ENCODE measurements at regions of chr16 and their contacts with region 1.

Region 1: DNA sequence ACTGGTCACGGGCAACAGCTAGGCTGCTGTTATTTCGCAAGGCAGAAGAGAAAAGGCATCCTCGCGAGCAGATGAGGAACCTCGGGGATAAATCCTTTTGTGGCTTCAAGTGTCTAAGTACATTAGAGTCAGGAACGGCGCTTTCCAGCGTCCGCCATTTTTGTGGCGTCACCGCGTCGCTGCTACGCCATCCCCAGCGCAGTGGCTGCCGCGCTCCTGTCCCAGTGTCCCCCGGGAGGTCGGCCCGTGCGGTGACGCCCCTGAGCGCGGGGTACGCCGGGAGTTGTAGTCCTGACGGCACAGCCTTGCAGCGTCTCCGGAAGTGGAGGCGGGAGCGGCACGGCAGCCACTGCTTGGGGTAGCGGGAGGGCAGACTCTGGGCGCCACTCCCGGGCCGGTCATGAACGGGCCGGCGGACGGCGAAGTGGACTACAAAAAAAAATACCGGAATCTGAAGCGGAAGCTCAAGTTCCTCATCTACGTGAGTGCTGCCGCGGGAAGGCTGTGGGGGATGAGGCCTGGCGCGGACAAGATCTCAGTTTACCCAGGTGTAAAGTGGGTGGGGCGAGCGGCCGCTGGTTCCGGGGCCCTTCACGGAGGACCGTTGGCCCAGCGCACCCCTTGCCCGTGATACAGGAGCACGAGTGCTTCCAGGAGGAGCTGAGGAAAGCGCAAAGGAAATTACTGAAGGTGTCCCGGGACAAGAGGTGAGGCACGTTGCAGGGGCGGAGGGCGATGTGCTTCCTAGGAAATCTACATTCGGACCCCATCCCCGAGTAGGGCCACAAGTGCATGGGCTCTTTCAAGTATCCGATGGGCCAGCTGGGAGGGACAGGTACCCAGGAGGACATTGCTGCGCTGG is at the start of gene INO80E:
- H3K4me3 Mint-ChIP-seq: peak within 1 kb of the TSS; percentile 100
- H3K27ac Mint-ChIP-seq: peak within 1 kb of the TSS; percentile 98
- H3K4me1 Mint-ChIP-seq: peaks cover 33% of the 10 kb centered on the region
- H3K27me3 Mint-ChIP-seq: no peaks in the 10 kb centered on the region

Region 2: DNA sequence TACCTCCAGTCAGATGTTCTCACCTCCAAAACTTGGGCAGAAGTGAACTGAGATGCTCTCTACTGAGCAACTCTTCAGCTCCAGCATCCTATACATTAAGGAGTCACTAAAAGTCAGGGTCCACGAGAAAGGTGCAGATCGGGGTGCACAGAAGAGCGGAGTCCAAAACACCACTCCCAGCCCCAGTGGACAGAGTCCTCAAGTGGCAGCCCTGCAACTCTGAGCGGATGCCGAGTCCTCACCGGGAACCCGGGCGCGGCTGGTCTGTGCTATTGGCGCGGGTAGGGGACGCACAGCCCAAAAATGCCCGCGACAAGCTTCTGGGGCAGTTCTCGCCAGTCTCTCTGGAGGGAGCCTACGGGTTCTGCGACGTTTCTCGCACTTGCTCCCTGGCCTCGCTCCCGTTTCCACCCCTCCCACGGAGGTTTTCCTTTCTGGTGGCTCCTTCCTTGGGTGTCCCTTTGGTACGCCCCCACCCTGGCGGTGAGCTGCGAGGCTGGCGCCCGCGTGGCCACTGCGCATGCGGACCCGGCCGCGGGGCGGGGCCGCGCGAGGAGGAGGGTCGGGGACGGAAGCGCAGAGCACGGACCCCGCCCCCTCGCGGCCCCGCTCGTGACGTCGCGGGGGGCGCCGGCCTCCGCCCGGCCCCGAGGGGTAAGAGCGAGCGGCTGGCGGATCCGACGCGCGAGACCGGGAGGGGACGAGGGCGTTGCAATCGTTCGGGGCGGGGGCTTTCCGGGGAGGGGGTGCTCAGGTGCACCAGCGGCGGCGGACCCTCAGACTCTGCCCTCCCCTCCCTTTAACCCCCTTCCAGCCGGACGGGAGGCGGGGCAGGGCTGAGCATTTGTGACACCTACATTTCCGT is 34.4 kb before region 1 on chr16 and contains the start of gene TMEM219:
- intact Hi-C with region 1: no loop called
- H3K4me3 Mint-ChIP-seq: peak within 1 kb of the TSS; percentile 76
- H3K27ac Mint-ChIP-seq: peak within 1 kb of the TSS; percentile 96
- H3K4me1 Mint-ChIP-seq: peaks cover 17% of the 10 kb centered on the region
- H3K27me3 Mint-ChIP-seq: no peaks in the 10 kb centered on the region

Region 3: DNA sequence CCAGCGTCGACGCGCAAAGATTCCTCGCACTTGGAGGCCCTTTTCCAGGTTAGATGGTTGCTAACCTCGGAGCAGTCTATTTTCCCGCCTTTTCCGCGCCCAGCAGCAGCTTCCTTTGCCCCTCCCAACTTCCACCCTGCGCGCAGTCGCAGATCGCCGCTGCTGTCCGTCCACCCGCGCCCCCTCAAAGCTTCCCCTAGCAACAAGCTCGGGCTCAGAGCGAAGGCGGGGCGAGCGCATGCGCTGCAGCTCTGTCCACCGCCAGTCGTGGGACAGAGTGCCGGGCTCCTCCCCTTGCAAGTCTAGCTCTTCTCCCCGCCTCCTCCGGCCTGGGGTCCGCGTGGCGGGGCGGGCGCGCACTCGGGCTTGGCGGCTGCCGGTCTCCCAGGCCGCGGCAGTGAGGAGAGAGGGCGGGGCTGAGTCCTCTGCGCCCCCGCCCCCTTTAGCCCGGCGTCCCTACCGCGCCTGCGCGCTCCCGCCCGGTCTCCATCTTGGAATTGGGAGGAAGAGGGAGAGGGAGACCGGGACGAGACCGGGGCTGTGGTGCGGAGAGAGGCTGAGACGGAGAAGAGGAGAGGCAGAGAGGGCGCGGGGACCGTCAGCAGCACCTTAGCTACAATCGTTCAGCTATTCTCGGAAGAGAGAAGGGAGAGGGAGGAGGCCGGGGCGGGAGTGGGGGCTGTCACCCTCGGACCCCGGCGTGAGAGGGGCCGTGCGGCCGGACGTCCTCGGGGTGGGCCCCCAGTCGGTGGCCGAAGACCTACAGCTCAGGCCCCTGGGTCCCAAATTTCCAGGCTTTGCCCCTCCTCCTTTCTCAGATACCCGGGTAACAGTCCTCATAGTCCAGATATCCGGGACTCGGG is 22.5 kb before region 1 on chr16 and contains the start of gene TAOK2:
- intact Hi-C with region 1: loop called (anchors 1 kb)
- H3K4me3 Mint-ChIP-seq: peak within 1 kb of the TSS; percentile 90
- H3K27ac Mint-ChIP-seq: peak within 1 kb of the TSS; percentile 88
- H3K4me1 Mint-ChIP-seq: peaks cover 63% of the 10 kb centered on the region
- H3K27me3 Mint-ChIP-seq: no peaks in the 10 kb centered on the region

Region 4: DNA sequence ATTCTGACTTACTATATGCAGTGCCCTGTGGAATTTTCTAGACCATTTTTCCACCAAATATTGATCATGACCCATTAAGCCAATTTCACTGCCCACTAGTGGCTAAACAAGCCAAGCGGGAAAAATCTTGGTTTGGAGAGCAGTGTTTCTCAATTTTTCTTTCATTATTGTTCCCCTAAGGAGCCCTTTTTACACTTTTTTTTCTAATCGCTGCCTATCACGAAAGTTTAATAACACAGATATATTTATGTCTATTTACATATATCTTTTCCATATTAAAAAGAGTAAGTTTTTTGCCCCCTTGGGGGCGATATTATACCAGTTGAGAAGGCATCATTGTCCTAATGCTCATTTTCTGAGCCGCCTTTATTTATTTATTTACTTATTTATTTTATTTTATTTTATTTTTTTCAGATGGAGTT is 45.7 kb after region 1 on chr16:
- intact Hi-C with region 1: no loop called
- H3K4me3 Mint-ChIP-seq: no peak overlapping the region
- H3K27ac Mint-ChIP-seq: no peak overlapping the region
- H3K4me1 Mint-ChIP-seq: peaks cover 6% of the 10 kb centered on the region
- H3K27me3 Mint-ChIP-seq: peaks cover 7% of the 10 kb centered on the region

Measured in dendritic cell treated with granulocyte-macrophage colony-stimulating factor and Interleukin-4, amounts not matched to agents 40 ng/mL and 50 ng/mL, for 4 days (primary cell).